ENCODE measurements at regions of chr20 and their contacts with region 1.

Region 1: GRCh38 chr20:57596998-57597939 is 23.0 kb downstream of the ZBP1 start:
- DNase-seq: no peak
- ATAC-seq: peak; percentile 90
- H3K4me3 ChIP-seq: no peak overlapping the region
- H3K27ac ChIP-seq: no peak overlapping the region
- H3K4me1 ChIP-seq: peaks cover 4% of the 10 kb centered on the region
- H3K27me3 ChIP-seq: no peaks in the 10 kb centered on the region; a peak in 1 of 4 replicates
- CTCF ChIP-seq: peak; percentile 71 to 92 (median 92)
- EP300 ChIP-seq: no peak
- POLR2A ChIP-seq: no peak
- RAD21 ChIP-seq: peak; percentile 86

Region 2: DNA sequence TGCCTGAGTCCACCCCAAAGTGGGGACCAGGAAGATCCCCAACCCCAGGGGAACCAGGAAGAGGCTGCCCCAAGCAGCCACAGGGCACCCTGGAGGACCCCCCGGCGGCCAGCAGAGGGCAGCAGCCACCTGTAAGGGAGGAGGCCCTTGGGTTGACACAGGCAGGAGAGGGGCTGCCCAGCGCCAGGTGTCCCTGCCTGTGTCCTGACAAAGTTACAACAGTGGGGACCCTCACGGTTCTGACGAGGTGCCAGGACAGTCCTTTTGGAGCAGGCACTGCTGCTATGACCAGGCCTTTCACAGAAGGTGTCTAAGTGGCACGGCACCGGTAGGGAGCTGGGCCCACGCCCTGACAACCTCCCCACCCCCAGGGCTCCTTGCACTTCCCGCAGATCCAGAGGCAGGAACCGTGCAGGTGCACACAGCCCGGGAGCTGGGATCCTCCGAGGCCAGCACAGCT is 507.5 kb before region 1 on chr20:
- CTCF ChIA-PET with region 1: interaction called, 3 read pairs
- POLR2A ChIA-PET with region 1: no interaction called
- RAD21 ChIA-PET with region 1: no interaction called
- SMC1A ChIA-PET with region 1: no interaction called
- in situ Hi-C with region 1: loop called (anchors 5 kb)
- intact Hi-C with region 1: no loop called
- DNase-seq: no peak
- ATAC-seq: peak; percentile 97
- H3K4me3 ChIP-seq: no peak overlapping the region
- H3K27ac ChIP-seq: no peak overlapping the region
- H3K4me1 ChIP-seq: no peaks in the 10 kb centered on the region
- H3K27me3 ChIP-seq: no peaks in the 10 kb centered on the region
- CTCF ChIP-seq: peak; percentile 77 to 95 (median 82)
- EP300 ChIP-seq: no peak
- POLR2A ChIP-seq: no peak
- RAD21 ChIP-seq: peak; percentile 78

Region 3: DNA sequence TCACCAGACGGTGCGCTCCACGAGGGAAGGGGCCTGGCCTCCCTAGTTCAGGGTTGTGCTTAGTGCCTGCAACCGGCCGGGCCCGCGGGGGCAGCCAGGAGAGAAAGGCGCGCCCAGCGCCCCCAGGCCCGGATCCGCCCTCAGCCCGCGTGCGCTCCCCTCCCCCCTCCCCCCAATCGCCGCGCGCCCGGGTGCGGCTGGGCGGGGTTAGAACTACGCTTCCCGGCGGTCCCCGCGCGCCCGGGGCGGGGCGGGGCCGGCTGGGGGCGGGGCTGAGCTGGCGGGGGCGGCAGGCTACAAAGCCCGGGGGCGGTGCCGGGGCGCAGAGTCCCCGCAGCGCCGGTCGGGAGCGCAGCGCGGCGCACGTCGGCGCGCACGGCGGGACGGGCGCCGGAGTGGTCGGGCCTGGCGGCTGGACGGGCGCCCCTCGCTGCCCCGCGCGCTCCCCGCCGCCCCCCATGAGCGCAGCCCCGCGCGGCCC is 206.2 kb before region 1 on chr20 and contains the start of gene RBM38:
- CTCF ChIA-PET with region 1: interaction called, 3 read pairs
- POLR2A ChIA-PET with region 1: no interaction called
- RAD21 ChIA-PET with region 1: no interaction called
- SMC1A ChIA-PET with region 1: no interaction called
- in situ Hi-C with region 1: loop called (anchors 5 kb)
- intact Hi-C with region 1: no loop called
- DNase-seq: no peak
- ATAC-seq: peak; percentile 48
- H3K4me3 ChIP-seq: peak within 1 kb of the TSS; percentile 94
- H3K27ac ChIP-seq: peak within 1 kb of the TSS; percentile 97
- H3K4me1 ChIP-seq: peaks cover 37% of the 10 kb centered on the region
- H3K27me3 ChIP-seq: no peaks in the 10 kb centered on the region
- CTCF ChIP-seq: no peak
- EP300 ChIP-seq: no peak
- POLR2A ChIP-seq: peak; percentile 55
- RAD21 ChIP-seq: no peak
- polyA plus RNA-seq, gene RBM38: 0.32 to 1.3 TPM

Region 4: DNA sequence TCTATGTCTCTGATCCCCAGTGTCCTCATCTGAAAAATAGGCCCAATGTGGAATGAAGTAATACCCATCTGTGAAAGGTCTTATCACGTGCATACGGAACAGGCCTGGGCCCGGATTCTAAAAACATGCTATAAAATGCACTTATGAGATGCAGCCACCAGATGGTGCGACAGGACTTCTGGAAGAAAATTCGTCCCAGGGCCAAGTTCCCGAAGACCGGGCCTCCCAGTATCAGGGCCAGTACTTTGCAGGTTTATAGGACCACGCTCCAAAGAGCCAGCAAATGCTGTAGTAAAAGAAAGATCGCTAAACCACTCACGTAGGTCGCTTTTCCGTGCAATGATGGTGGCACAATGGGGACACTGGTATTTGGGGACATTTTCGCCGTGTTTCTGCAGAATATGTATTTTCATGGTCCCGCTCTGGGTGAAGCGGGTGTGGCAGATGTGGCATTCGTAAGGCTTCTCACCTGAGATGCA is 83.0 kb before region 1 on chr20:
- CTCF ChIA-PET with region 1: interaction called, 21 read pairs
- POLR2A ChIA-PET with region 1: no interaction called
- RAD21 ChIA-PET with region 1: interaction called, 12 read pairs
- SMC1A ChIA-PET with region 1: interaction called, 3 read pairs
- in situ Hi-C with region 1: loop called (anchors 5 kb)
- intact Hi-C with region 1: loop called (anchors 1 kb)
- DNase-seq: no peak
- ATAC-seq: peak; percentile 73
- H3K4me3 ChIP-seq: no peak overlapping the region
- H3K27ac ChIP-seq: no peak overlapping the region
- H3K4me1 ChIP-seq: no peaks in the 10 kb centered on the region
- H3K27me3 ChIP-seq: no peaks in the 10 kb centered on the region
- CTCF ChIP-seq: peak; percentile 58 to 78 (median 63)
- EP300 ChIP-seq: no peak
- POLR2A ChIP-seq: no peak
- RAD21 ChIP-seq: peak; percentile 83

Region 5: GRCh38 chr20:57622579-57623377 is 25.5 kb after region 1 on chr20:
- CTCF ChIA-PET with region 1: interaction called, 32 read pairs
- POLR2A ChIA-PET with region 1: no interaction called
- RAD21 ChIA-PET with region 1: interaction called, 14 read pairs
- SMC1A ChIA-PET with region 1: interaction called, 4 read pairs
- in situ Hi-C with region 1: no loop called
- intact Hi-C with region 1: no loop called
- DNase-seq: no peak
- ATAC-seq: peak; percentile 24
- H3K4me3 ChIP-seq: no peak overlapping the region
- H3K27ac ChIP-seq: no peak overlapping the region
- H3K4me1 ChIP-seq: peaks cover 40% of the 10 kb centered on the region
- H3K27me3 ChIP-seq: no peaks in the 10 kb centered on the region
- CTCF ChIP-seq: peak; percentile 64 to 93 (median 90)
- EP300 ChIP-seq: no peak
- POLR2A ChIP-seq: no peak
- RAD21 ChIP-seq: peak; percentile 73

Region 6: GRCh38 chr20:58087193-58087858 is 490.1 kb after region 1 on chr20:
- CTCF ChIA-PET with region 1: interaction called, 8 read pairs
- POLR2A ChIA-PET with region 1: no interaction called
- RAD21 ChIA-PET with region 1: interaction called, 7 read pairs
- SMC1A ChIA-PET with region 1: interaction called, 3 read pairs
- in situ Hi-C with region 1: no loop called
- intact Hi-C with region 1: loop called (anchors 2 kb)
- DNase-seq: no peak
- ATAC-seq: peak; percentile 53; the same call in 1 of the 3 replicates
- H3K4me3 ChIP-seq: no peak overlapping the region
- H3K27ac ChIP-seq: no peak overlapping the region
- H3K4me1 ChIP-seq: no peaks in the 10 kb centered on the region
- H3K27me3 ChIP-seq: peaks cover 2 to 4% of the 10 kb centered on the region in 2 experiments; a peak in 3 of 4 replicates
- CTCF ChIP-seq: peak; percentile 68 to 86 (median 83)
- EP300 ChIP-seq: no peak
- POLR2A ChIP-seq: no peak
- RAD21 ChIP-seq: peak; percentile 66

Region 7: GRCh38 chr20:58209652-58210397 is 612.6 kb after region 1 on chr20:
- CTCF ChIA-PET with region 1: interaction called, 16 read pairs
- POLR2A ChIA-PET with region 1: no interaction called
- RAD21 ChIA-PET with region 1: no interaction called
- SMC1A ChIA-PET with region 1: no interaction called
- in situ Hi-C with region 1: no loop called
- intact Hi-C with region 1: loop called (anchors 2 kb)
- DNase-seq: peak; percentile 17
- ATAC-seq: peak; percentile 98
- H3K4me3 ChIP-seq: no peak overlapping the region
- H3K27ac ChIP-seq: no peak overlapping the region
- H3K4me1 ChIP-seq: no peaks in the 10 kb centered on the region
- H3K27me3 ChIP-seq: no peaks in the 10 kb centered on the region; a peak in 3 of 4 replicates
- CTCF ChIP-seq: peak; percentile 100; a peak in 5 of 6 replicates
- EP300 ChIP-seq: no peak
- POLR2A ChIP-seq: no peak
- RAD21 ChIP-seq: peak; percentile 89